ENCODE measurements at regions of chr16 and their contacts with region 1.

Region 1: DNA sequence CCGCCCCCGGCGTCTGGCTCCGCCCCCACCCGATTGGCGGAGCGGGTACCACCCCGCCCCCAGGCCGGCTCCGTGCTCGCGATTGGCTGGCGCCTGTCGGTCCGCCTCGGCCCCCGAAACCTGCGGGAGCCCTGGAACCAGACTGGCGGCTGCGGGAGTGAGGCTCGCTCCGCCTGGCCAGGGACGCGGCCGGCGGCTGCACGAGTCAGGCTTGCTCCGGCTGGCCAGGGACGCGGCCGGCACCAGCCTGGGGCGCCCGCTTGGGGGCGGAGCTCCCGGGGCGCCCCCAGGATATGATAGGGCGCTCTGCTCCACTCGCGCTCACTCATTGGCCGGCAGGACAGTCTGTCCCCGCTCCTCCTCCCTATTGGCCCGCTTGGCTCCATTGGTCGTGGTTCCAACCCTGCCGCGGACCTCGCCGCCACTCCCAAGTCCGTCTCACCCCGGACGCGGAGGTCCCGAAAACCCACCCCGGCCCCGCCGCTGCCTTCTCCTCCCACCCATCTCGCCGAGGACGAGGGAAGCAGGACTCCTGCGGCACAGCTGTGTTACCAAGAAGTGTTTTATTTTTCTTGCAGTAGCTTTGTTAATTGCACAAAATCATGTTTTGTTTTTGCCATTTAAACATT is 340 bp upstream of the ROGDI start:
- DNase-seq: peak; percentile 73 to 95
- H3K4me3 ChIP-seq: peak overlapping the region; percentile 74 to 78
- H3K27ac ChIP-seq: peak overlapping the region; percentile 67 to 69
- H3K4me1 ChIP-seq: peaks cover 4 to 9% of the 10 kb centered on the region in 2 donors
- H3K27me3 ChIP-seq: no peaks in the 10 kb centered on the region
- CTCF ChIP-seq: peak in 1 of 3 experiments; percentile 1

Region 2: DNA sequence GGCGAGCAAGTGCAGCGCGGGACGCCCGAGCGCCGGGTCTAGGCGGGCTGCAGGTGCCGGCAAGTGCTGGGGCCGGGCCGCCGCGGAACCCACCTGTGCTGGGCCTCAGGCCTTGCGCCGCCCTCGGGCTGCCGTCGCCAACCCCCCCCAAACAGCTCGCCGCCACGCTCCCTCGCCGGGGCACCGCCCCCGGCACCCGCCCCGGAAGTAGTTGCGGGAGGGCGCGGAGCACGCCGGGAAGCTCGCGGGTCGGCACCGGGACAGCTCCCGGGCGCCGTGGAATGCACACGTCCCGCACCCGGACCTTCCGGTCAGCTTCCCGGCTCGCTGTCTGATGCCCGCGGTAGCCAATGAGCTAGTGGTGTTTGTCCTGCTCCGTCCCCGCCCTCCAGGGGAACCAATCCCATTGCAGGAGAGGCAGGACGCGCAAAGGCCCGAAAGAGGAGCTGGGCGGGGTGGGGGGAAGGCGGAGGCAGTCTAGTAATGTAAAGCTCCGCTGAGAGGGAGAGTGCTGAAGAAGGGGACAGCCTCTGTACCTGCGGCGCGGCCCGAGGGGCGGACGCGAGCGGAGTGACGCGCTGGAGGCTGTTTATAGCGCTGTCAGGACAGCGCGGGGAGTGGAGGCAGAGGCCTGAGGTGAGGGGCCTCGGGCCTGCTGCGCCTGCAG is 68.6 kb before region 1 on chr16 and contains the starts of genes ANKS3 and DNAAF8:
- intact Hi-C with region 1: loop called (anchors 2 kb)
- DNase-seq: peak; percentile 91 to 99
- H3K4me3 ChIP-seq: peak within 1 kb of the TSS; percentile 78 to 92
- H3K27ac ChIP-seq: peak within 1 kb of the TSS; percentile 78 to 79
- H3K4me1 ChIP-seq: peaks cover 0 to 8% of the 10 kb centered on the region in 2 donors
- H3K27me3 ChIP-seq: no peaks in the 10 kb centered on the region
- CTCF ChIP-seq: no peak
- total RNA-seq, gene ANKS3: 55.9 TPM
- total RNA-seq, gene DNAAF8: not detected

Region 3: DNA sequence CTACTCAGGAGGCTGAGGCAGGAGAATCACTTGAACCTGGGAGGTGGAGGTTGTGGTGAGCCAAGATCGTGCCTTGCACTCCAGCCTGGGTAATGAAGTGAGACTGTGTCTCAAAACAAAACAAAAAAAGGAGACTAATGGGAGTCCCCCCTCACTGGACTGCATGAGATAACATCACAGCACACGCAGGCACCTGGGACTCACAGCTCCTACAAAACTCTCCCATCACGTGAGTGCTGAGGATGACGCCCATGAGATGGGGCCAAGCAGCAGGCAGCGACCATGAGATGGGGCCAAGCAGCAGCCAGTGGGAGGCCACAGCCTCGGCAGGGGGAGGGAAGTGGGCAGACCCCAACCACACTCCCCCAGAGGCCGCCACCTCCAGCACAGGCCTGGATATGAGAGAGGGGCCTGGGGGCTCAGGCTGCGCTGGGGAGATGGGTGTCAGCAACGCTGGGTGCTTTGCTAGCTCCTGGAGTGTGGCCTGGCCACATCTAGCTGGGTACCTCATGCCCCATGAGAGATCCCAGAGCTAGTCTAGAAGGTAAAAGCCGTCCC is 53.0 kb before region 1 on chr16:
- intact Hi-C with region 1: no loop called
- DNase-seq: no peak
- H3K4me3 ChIP-seq: no peak overlapping the region
- H3K27ac ChIP-seq: no peak overlapping the region
- H3K4me1 ChIP-seq: peaks cover 0 to 3% of the 10 kb centered on the region in 2 donors
- H3K27me3 ChIP-seq: no peaks in the 10 kb centered on the region
- CTCF ChIP-seq: no peak

Region 4: GRCh38 chr16:4846891-4847773 is 44.4 kb after region 1 on chr16 and contains the starts of genes GLYR1 and UBN1:
- intact Hi-C with region 1: loop called (anchors 2 kb)
- DNase-seq: peak; percentile 97 to 100
- H3K4me3 ChIP-seq: peak within 1 kb of the TSS; percentile 74 to 98
- H3K27ac ChIP-seq: peak within 1 kb of the TSS; percentile 92 to 97
- H3K4me1 ChIP-seq: peaks cover 12 to 23% of the 10 kb centered on the region in 2 donors
- H3K27me3 ChIP-seq: no peaks in the 10 kb centered on the region
- CTCF ChIP-seq: no peak
- total RNA-seq, gene GLYR1: 39.2 TPM
- total RNA-seq, gene UBN1: 31.8 TPM

Measured in ascending aorta (tissue), 2 donors.